ENCODE measurements at regions of chr16 and their contacts with region 1.

Region 1: GRCh38 chr16:72832621-72833248 is 215.2 kb downstream of the ZFHX3 start:
- DNase-seq: peak; percentile 80
- H3K4me3 Mint-ChIP-seq: no peak overlapping the region
- H3K27ac Mint-ChIP-seq: no peak overlapping the region
- H3K4me1 Mint-ChIP-seq: peaks cover 4% of the 10 kb centered on the region
- H3K27me3 Mint-ChIP-seq: no peaks in the 10 kb centered on the region
- CTCF ChIP-seq: peak; percentile 89

Region 2: GRCh38 chr16:72501739-72502593 is 330.8 kb before region 1 on chr16:
- CTCF ChIA-PET with region 1: interaction called, 15 read pairs
- POLR2A ChIA-PET with region 1: no interaction called
- intact Hi-C with region 1: no loop called
- DNase-seq: peak; percentile 71
- H3K4me3 Mint-ChIP-seq: no peak overlapping the region
- H3K27ac Mint-ChIP-seq: no peak overlapping the region
- H3K4me1 Mint-ChIP-seq: peaks cover 6% of the 10 kb centered on the region
- H3K27me3 Mint-ChIP-seq: no peaks in the 10 kb centered on the region
- CTCF ChIP-seq: peak; percentile 93

Region 3: GRCh38 chr16:72612256-72612655 is 220.5 kb before region 1 on chr16:
- CTCF ChIA-PET with region 1: no interaction called
- POLR2A ChIA-PET with region 1: no interaction called
- intact Hi-C with region 1: no loop called
- DNase-seq: no peak
- H3K4me3 Mint-ChIP-seq: no peak overlapping the region
- H3K27ac Mint-ChIP-seq: no peak overlapping the region
- H3K4me1 Mint-ChIP-seq: no peaks in the 10 kb centered on the region
- H3K27me3 Mint-ChIP-seq: no peaks in the 10 kb centered on the region
- CTCF ChIP-seq: no peak

Region 4: GRCh38 chr16:72856797-72857196 is 24.1 kb after region 1 on chr16:
- CTCF ChIA-PET with region 1: interaction called, 43 read pairs
- POLR2A ChIA-PET with region 1: no interaction called
- intact Hi-C with region 1: no loop called
- DNase-seq: peak; percentile 49
- H3K4me3 Mint-ChIP-seq: no peak overlapping the region
- H3K27ac Mint-ChIP-seq: no peak overlapping the region
- H3K4me1 Mint-ChIP-seq: no peaks in the 10 kb centered on the region
- H3K27me3 Mint-ChIP-seq: no peaks in the 10 kb centered on the region
- CTCF ChIP-seq: peak; percentile 24

Region 5: DNA sequence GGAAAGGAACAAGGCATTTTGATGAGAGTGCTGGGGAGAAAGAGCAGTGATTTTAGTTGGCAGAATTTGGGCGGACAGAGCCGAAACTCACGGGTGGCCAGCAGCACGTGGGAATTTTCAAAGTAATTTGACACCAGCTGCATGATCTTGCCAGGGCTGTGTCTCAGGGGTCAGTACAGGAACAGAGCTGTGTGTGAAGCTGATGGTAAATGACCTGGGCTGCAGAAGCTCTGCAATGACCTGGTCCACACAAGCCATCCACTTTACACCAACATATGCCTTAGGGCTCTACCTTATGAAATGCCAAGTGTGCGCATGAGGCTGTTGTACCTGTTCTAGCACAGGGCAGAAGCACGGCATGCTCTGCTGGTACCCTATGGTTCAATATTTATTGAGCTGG is 103.2 kb after region 1 on chr16:
- CTCF ChIA-PET with region 1: interaction called, 15 read pairs
- POLR2A ChIA-PET with region 1: no interaction called
- intact Hi-C with region 1: no loop called
- DNase-seq: no peak
- H3K4me3 Mint-ChIP-seq: no peak overlapping the region
- H3K27ac Mint-ChIP-seq: no peak overlapping the region
- H3K4me1 Mint-ChIP-seq: peaks cover 31% of the 10 kb centered on the region
- H3K27me3 Mint-ChIP-seq: no peaks in the 10 kb centered on the region
- CTCF ChIP-seq: no peak

Region 6: GRCh38 chr16:73006026-73006425 is 173.3 kb after region 1 on chr16:
- CTCF ChIA-PET with region 1: interaction called, 10 read pairs
- POLR2A ChIA-PET with region 1: no interaction called
- intact Hi-C with region 1: no loop called
- DNase-seq: no peak
- H3K4me3 Mint-ChIP-seq: no peak overlapping the region
- H3K27ac Mint-ChIP-seq: no peak overlapping the region
- H3K4me1 Mint-ChIP-seq: peaks cover 6% of the 10 kb centered on the region
- H3K27me3 Mint-ChIP-seq: no peaks in the 10 kb centered on the region
- CTCF ChIP-seq: no peak

Region 7: GRCh38 chr16:73058221-73058615 is 225.5 kb after region 1 on chr16:
- CTCF ChIA-PET with region 1: interaction called, 19 read pairs
- POLR2A ChIA-PET with region 1: interaction called, 4 read pairs
- intact Hi-C with region 1: no loop called
- DNase-seq: peak; percentile 46
- H3K4me3 Mint-ChIP-seq: peak overlapping the region; percentile 87
- H3K27ac Mint-ChIP-seq: no peak overlapping the region
- H3K4me1 Mint-ChIP-seq: peaks cover 38% of the 10 kb centered on the region
- H3K27me3 Mint-ChIP-seq: no peaks in the 10 kb centered on the region
- CTCF ChIP-seq: peak; percentile 11

Region 8: GRCh38 chr16:73185737-73186136 is 353.0 kb after region 1 on chr16:
- CTCF ChIA-PET with region 1: interaction called, 10 read pairs
- POLR2A ChIA-PET with region 1: no interaction called
- intact Hi-C with region 1: no loop called
- DNase-seq: no peak
- H3K4me3 Mint-ChIP-seq: no peak overlapping the region
- H3K27ac Mint-ChIP-seq: no peak overlapping the region
- H3K4me1 Mint-ChIP-seq: no peaks in the 10 kb centered on the region
- H3K27me3 Mint-ChIP-seq: peaks cover 7% of the 10 kb centered on the region
- CTCF ChIP-seq: no peak

Measured in MCF 10A (cell line).